ENCODE measurements at regions of chr12 and their contacts with region 1.

Region 1: DNA sequence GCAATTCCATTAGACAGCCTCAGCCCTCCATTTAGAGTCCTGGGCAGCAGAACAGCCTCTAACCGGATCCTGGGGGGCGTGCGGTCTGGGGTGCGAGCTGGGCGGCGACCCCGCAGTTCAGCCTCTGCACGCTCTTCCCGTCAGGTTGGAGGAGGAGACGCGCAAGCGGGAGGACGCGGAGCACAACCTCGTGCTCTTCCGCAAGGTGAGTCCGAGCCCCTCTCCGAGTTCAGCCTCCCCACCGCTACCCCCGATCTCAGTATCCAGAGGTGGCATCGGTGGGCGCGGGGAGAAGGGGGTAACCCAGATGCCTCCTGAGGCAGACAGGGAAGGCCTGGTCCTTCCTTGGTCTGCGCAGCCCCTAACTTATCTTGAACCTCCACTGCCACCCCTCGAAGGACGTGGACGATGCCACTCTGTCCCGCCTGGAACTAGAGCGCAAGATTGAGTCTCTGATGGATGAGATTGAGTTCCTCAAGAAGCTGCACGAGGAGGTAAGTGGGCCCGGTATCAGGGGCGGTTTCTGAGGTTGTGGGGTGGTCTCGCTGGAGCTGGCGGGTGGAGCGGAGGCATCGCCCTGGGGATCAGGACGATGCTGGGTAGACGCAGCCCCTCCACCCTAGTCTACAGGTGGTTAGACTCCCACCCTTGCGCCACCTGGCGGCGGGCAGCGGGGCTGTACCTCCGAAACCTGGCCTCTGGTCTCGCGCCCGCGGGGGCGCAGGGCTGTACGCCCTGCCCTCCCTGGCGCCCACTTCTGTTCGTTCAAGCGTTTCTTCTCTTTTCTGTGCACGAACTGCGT is 1.3 kb downstream of the PRPH start:
- DNase-seq: no peak
- H3K4me3 ChIP-seq: no peak overlapping the region
- H3K27ac ChIP-seq: no peak overlapping the region
- H3K4me1 ChIP-seq: no peaks in the 10 kb centered on the region
- H3K27me3 ChIP-seq: peaks cover 21% of the 10 kb centered on the region
- CTCF ChIP-seq: peak; percentile 34 to 51 (median 44)
- POLR2A ChIP-seq: no peak

Region 2: DNA sequence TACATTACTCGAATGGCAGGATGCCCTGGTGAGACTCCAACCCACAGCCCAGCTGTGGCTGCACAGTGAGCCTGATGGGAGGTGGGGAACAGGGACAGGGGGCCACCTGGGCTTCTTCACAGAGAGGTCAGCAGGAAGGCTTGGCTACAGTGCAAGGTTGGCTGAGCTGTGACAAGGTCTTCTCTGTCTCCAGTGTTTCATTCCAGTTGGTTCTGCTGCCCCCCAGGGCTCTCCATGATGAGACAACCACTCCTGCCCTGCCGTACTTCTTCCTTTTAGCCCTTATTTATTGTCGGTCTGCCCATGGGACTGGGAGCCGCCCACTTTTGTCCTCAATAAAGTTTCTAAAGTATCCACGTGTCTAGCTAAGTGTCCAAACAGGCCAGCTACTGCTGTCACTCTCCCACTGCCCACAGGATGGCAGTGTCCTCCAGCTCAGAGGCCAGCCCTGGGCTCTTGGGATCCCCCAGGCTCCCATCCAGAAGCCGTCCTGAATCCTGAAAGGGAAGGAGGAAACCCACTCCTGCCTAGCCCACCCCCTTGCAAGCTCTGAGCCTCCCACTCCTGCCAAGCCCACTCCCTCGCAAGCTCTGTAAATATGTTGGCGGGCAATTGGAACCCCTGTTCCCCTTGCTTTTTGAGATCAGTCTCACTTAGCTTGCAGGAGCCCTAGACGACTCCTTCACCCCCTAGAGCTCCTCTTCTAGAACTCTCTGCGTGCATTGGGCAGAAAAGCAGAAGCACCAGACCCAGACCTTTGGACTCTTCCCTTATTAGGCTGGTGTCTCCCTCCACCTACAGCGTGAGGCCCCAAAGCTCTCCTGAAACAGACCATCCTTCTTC is 35.4 kb after region 1 on chr12:
- intact Hi-C with region 1: loop called (anchors 5 kb)
- DNase-seq: peak; percentile 87
- H3K4me3 ChIP-seq: no peak overlapping the region
- H3K27ac ChIP-seq: no peak overlapping the region
- H3K4me1 ChIP-seq: peaks cover 4% of the 10 kb centered on the region
- H3K27me3 ChIP-seq: peaks cover 12% of the 10 kb centered on the region
- CTCF ChIP-seq: peak; percentile 68 to 95 (median 88)
- POLR2A ChIP-seq: no peak

Measured in prostate gland (tissue), 2 donors.